Heart right ventricle (tissue), 16 donors: ENCODE measurements at regions of chr12 and their contacts with region 1.

Region 1: GRCh38 chr12:122526683-122527477 is at the starts of genes KNTC1 and RSRC2:
- DNase-seq: peak; percentile 93 to 100
- ATAC-seq: peak; percentile 97 to 99 (median 98)
- H3K4me3 ChIP-seq: peak within 1 kb of the TSS; percentile 57 to 91 (median 76)
- H3K27ac ChIP-seq: peak within 1 kb of the TSS; percentile 92 to 100 (median 98)
- H3K4me1 ChIP-seq: peaks cover 6 to 48% (median 46%) of the 10 kb centered on the region in 9 donors
- H3K27me3 ChIP-seq: no peaks in the 10 kb centered on the region
- CTCF ChIP-seq: peak in 1 of 9 donors; percentile 6
- total RNA-seq, gene KNTC1: 2.0 to 7.0 (median 3.0) TPM
- total RNA-seq, gene RSRC2: 36.1 to 44.3 (median 40.6) TPM

Region 2: DNA sequence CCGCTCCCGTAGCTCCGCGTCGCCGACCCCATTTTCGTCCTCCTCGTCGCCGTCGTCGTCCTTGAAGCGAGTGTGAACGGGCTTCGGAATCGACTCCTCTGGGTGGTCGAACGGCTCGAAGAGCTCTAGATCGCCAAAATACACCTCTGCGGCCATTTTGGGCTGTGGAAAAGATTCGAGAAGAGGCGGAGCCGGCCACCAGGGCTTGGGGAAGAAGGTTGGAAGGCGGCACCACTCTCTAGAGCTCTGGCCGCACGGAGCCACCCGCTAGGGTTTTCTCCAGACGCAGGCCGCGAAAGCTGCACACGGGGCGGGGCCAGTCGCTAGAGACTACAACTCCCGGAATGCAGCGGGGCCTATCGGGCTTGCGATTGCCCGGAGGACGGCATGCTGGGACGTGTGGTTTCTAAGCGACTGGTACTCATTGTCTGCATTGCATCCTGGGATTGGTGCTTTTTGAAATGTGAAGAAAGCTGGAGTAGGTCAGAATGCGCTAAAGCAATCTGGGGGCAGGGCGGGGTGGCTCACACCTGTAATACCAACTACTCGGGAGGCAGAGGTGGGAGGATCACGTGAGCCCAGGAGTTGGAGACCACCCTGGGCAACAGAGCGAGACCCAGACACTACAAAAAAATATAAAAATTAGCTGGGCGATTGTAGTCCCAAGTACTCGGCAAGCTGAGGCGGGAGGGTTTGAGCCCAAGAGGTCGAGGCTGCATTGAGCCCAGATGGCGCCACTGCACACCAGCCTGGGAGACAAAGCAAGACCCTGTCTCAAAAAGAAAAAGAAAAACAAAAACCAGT is 26.0 kb before region 1 on chr12 and contains the start of gene ZCCHC8:
- intact Hi-C with region 1: loop called in 2 of 10 experiments (anchors 1 to 2 kb)
- DNase-seq: peak; percentile 96 to 97
- ATAC-seq: peak; percentile 98 to 99 (median 99)
- H3K4me3 ChIP-seq: peak within 1 kb of the TSS; percentile 64 to 98 (median 75)
- H3K27ac ChIP-seq: peak within 1 kb of the TSS; percentile 92 to 100 (median 98)
- H3K4me1 ChIP-seq: peaks cover 10 to 47% (median 27%) of the 10 kb centered on the region in 9 donors
- H3K27me3 ChIP-seq: no peaks in the 10 kb centered on the region
- CTCF ChIP-seq: peak in 3 of 9 donors; percentile 14 to 18 (median 14)
- total RNA-seq, gene ZCCHC8: 7.9 to 11.1 (median 9.2) TPM

Region 3: GRCh38 chr12:122610876-122611275 is 84.0 kb after region 1 on chr12:
- intact Hi-C with region 1: no loop called
- DNase-seq: no peak
- ATAC-seq: no peak
- H3K4me3 ChIP-seq: no peak overlapping the region
- H3K27ac ChIP-seq: no peak overlapping the region
- H3K4me1 ChIP-seq: no peaks in the 10 kb centered on the region
- H3K27me3 ChIP-seq: no peaks in the 10 kb centered on the region
- CTCF ChIP-seq: no peak

Region 4: GRCh38 chr12:122726080-122726558 is 199.2 kb after region 1 on chr12:
- intact Hi-C with region 1: no loop called
- DNase-seq: no peak
- ATAC-seq: peak in 1 of 8 donors; percentile 39
- H3K4me3 ChIP-seq: no peak overlapping the region
- H3K27ac ChIP-seq: peak overlapping the region in 1 of 10 donors; percentile 4
- H3K4me1 ChIP-seq: peaks cover 0 to 16% (median 0%) of the 10 kb centered on the region in 9 donors
- H3K27me3 ChIP-seq: peaks cover 0 to 11% (median 0%) of the 10 kb centered on the region in 7 donors
- CTCF ChIP-seq: no peak